Caco-2 (cell line): ENCODE measurements at regions of chr1 and their contacts with region 1.

Region 1: DNA sequence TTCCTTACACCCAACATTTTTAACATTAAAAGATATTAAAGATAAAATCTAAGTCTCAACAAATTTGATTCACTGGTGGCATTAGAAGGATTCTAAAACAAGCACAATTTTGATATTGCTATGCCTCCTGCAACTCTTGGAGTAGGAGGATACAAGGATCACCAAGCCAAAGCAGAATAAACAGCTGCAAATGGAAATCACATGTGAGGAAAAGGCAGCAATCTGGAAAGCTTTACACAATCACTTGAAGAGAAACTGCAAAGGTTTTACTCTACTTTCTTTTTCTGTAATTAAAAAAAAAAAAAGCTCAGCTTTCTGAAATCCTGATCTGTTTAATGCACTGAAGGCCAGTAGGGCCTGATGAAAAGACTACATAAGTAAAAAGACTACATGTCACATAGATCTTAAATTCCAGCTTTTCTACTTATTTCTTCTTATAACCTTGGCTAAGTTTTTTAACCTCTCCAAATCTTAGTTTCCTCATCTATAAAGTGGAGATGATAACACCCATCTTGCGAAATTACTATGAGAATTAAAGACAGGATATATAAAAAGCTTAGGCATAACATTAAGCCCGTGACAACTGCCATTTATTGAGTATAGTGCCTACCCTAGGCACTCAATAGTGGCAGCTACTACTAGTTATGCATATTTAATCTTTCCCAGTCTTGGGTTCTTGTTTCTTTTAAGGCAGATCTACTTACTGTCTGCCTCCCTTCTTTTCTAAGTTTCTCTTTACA is 73.5 kb downstream of the EPS15 start:
- DNase-seq: no peak
- H3K4me3 ChIP-seq: no peak overlapping the region
- H3K4me3 Mint-ChIP-seq: no peak overlapping the region
- H3K27ac Mint-ChIP-seq: no peak overlapping the region
- H3K4me1 ChIP-seq: no peaks in the 10 kb centered on the region
- H3K4me1 Mint-ChIP-seq: no peaks in the 10 kb centered on the region
- H3K27me3 ChIP-seq: no peaks in the 10 kb centered on the region
- H3K27me3 Mint-ChIP-seq: no peaks in the 10 kb centered on the region
- CTCF ChIP-seq: no peak

Region 2: DNA sequence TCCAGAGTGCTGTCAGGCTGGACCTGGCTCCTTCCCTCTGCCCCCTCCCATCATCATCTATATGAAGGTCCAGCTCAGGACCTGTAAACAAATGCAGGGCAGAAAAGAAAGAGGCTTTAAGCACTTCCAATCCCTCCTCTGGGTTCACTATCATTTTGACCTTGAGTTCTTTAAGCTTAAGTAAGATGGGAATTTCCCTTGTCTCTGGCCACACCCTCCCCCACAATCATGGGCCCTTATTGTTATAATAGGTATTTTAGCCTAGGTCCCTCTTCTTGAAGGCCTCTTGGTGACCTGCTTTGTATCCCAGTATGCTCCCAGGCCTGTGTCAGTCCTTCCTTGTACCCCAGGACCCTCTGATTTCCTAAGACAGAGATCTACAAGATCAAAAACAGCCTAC is 118.6 kb after region 1 on chr1:
- CTCF ChIA-PET with region 1: no interaction called
- POLR2A ChIA-PET with region 1: no interaction called
- intact Hi-C with region 1: no loop called
- DNase-seq: no peak
- H3K4me3 ChIP-seq: no peak overlapping the region
- H3K4me3 Mint-ChIP-seq: no peak overlapping the region
- H3K27ac Mint-ChIP-seq: no peak overlapping the region
- H3K4me1 ChIP-seq: peaks cover 29% of the 10 kb centered on the region
- H3K4me1 Mint-ChIP-seq: peaks cover 9% of the 10 kb centered on the region
- H3K27me3 ChIP-seq: no peaks in the 10 kb centered on the region
- H3K27me3 Mint-ChIP-seq: no peaks in the 10 kb centered on the region
- CTCF ChIP-seq: no peak

Region 3: GRCh38 chr1:51656374-51656773 is 210.9 kb after region 1 on chr1:
- CTCF ChIA-PET with region 1: no interaction called
- POLR2A ChIA-PET with region 1: interaction called, 23 read pairs
- intact Hi-C with region 1: no loop called
- DNase-seq: no peak
- H3K4me3 ChIP-seq: no peak overlapping the region
- H3K4me3 Mint-ChIP-seq: no peak overlapping the region
- H3K27ac Mint-ChIP-seq: no peak overlapping the region
- H3K4me1 ChIP-seq: peaks cover 14% of the 10 kb centered on the region
- H3K4me1 Mint-ChIP-seq: peaks cover 22% of the 10 kb centered on the region
- H3K27me3 ChIP-seq: no peaks in the 10 kb centered on the region
- H3K27me3 Mint-ChIP-seq: no peaks in the 10 kb centered on the region
- CTCF ChIP-seq: no peak